Common myeloid progenitor, CD34-positive (primary cell): ENCODE measurements at regions of chr9 and their contacts with region 1.

Region 1: DNA sequence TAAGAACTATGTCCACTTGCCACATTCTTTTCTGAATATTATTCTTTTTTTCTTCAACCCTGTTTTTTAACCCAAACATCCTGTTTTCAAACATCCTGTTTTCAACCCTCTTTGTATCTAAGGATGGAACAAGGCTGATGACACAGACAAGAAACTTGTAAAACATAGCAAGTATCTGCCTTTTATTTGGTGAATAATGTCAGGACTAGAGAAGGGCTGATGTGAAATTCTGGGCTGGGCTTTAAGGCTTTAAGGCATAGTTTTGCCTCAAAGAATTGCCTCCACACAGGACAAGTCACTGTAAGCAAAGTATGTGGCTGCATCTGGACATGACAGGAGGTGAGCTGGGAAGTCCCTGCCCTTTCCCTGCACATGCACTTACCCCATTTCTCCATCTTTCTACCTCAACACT is 42.5 kb upstream of the RIC1 start:
- DNase-seq: no peak
- H3K4me3 ChIP-seq: no peak overlapping the region
- H3K27ac ChIP-seq: no peak overlapping the region
- H3K4me1 ChIP-seq: peaks cover 0 to 2% (median 0%) of the 10 kb centered on the region in 4 experiments
- H3K27me3 ChIP-seq: no peaks in the 10 kb centered on the region

Region 2: DNA sequence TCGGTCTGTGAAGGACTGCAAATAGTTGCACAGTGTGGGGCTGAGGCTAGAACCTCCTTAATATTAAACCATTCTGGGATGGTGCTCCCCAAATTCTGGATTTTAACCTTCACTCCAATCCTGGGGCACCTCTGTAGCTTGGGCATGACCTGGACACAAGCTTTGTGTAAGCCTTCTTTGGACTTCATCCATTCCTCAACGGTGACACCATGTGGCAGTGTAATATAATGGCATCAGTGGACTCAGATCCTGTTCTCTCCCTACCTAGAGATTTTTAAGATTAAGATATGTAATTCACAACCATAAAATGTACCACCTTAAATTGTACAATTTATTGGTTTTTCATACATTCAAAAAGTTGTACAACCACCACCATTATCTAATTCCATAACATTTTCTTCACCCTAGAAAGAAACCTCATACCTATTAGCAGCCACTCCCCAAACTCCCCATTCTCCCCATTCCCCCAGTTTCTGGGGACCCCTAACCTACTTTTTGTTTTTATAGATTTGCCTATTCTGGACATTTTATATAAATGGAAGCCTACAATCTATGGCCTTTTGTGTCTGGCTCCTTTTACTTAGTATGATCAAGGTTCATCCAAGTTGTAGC is 143.9 kb before region 1 on chr9:
- CTCF ChIA-PET with region 1: interaction called, 55 read pairs
- POLR2A ChIA-PET with region 1: no interaction called
- DNase-seq: peak; percentile 60 to 72 (median 71)
- H3K4me3 ChIP-seq: no peak overlapping the region
- H3K27ac ChIP-seq: no peak overlapping the region
- H3K4me1 ChIP-seq: peaks cover 0 to 23% (median 7%) of the 10 kb centered on the region in 4 experiments
- H3K27me3 ChIP-seq: no peaks in the 10 kb centered on the region

Region 3: GRCh38 chr9:5450359-5451091 is 135.9 kb before region 1 on chr9 and contains the start of gene CD274:
- CTCF ChIA-PET with region 1: interaction called, 52 read pairs
- POLR2A ChIA-PET with region 1: no interaction called
- DNase-seq: peak; percentile 84 to 88 (median 85)
- H3K4me3 ChIP-seq: peak within 1 kb of the TSS; percentile 62 to 97 (median 84)
- H3K27ac ChIP-seq: peak within 1 kb of the TSS; percentile 80 to 89
- H3K4me1 ChIP-seq: peaks cover 0 to 30% (median 14%) of the 10 kb centered on the region in 4 experiments
- H3K27me3 ChIP-seq: no peaks in the 10 kb centered on the region

Region 4: GRCh38 chr9:5543875-5544702 is 42.3 kb before region 1 on chr9:
- CTCF ChIA-PET with region 1: no interaction called
- POLR2A ChIA-PET with region 1: no interaction called
- DNase-seq: no peak
- H3K4me3 ChIP-seq: no peak overlapping the region
- H3K27ac ChIP-seq: no peak overlapping the region
- H3K4me1 ChIP-seq: no peaks in the 10 kb centered on the region
- H3K27me3 ChIP-seq: no peaks in the 10 kb centered on the region

Region 5: GRCh38 chr9:5708414-5708813 is 122.0 kb after region 1 on chr9:
- CTCF ChIA-PET with region 1: no interaction called
- POLR2A ChIA-PET with region 1: no interaction called
- DNase-seq: peak; percentile 15 to 55 (median 44)
- H3K4me3 ChIP-seq: no peak overlapping the region
- H3K27ac ChIP-seq: no peak overlapping the region
- H3K4me1 ChIP-seq: no peaks in the 10 kb centered on the region
- H3K27me3 ChIP-seq: no peaks in the 10 kb centered on the region